Heart right ventricle (tissue), 16 donors: ENCODE measurements at regions of chr4 and their contacts with region 1.

Region 1: DNA sequence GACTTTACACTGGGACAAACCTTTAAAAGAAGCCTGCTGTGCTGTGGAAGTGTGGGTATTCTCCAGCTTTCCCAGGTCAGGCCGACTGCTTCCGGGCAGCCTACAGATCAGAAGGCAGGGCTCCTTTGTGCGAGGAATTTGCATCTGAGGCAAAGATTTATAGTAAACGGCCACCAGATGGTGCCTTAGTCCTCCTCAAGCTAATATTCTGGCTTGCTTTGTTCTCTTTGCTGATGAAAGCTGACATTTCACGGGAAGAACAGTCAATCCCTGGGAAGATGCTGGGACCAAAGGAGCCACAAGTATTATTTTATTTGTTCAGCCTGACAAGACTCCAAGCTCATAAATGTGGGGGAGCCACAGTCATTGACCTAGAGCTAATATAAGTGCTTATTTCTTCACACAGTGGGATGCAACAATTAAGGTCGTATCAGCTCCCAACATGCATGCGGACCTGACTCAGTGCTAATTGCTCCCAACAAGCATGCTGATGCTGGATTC is 120.7 kb upstream of the TRIM2 start:
- DNase-seq: peak in 1 of 2 donors; percentile 52
- ATAC-seq: peak; percentile 46 to 83 (median 74)
- H3K4me3 ChIP-seq: no peak overlapping the region
- H3K27ac ChIP-seq: no peak overlapping the region
- H3K4me1 ChIP-seq: peaks cover 0 to 25% (median 6%) of the 10 kb centered on the region in 9 donors
- H3K27me3 ChIP-seq: no peaks in the 10 kb centered on the region
- CTCF ChIP-seq: peak in 8 of 9 donors; percentile 28 to 71 (median 65)

Region 2: DNA sequence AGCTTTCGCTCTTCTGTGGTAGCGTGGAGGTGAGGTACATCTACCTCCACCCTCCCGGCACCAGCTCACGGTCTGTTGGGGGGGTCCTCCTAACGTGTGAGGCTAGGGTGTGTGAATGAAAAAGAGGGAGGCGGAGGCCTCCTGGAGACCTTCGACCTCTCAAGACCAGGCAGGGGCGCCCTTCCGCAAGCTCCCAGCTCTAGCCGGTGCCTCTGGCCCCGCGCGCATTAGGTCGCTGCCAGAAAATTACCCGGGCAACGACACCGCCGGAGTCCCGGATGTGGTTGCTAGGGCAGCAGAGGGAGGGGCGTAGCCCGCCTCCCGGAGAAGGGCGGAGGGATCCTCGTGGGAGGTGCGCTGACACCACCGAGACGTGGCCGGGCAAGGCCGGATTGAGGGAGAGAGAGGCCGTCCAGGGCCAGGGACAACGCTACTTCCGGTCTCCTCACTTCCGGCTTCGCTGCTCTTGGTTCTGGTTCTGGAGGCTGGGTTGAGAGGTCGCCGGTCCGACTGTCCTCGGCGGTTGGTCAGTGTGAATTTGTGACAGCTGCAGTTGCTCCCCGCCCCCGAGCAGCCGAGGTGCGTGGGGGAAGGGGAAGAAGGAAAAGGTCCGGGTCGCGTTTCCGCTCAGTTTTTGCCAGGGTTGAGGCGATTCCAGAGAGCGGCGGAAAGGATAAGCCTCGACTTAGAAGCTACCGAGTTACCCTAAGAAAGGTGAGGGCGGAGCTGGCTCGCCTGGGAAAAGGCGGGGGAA is 303.8 kb before region 1 on chr4 and contains the starts of genes ARFIP1 and TIGD4:
- intact Hi-C with region 1: loop called in 1 of 10 experiments (anchors 10 kb)
- DNase-seq: peak; percentile 97
- ATAC-seq: peak; percentile 99 to 100 (median 99)
- H3K4me3 ChIP-seq: peak within 1 kb of the TSS; percentile 51 to 95 (median 78)
- H3K27ac ChIP-seq: peak within 1 kb of the TSS; percentile 42 to 95 (median 88)
- H3K4me1 ChIP-seq: peaks cover 0 to 45% (median 23%) of the 10 kb centered on the region in 9 donors
- H3K27me3 ChIP-seq: no peaks in the 10 kb centered on the region
- CTCF ChIP-seq: peak in 6 of 9 donors; percentile 8 to 53 (median 42)
- total RNA-seq, gene ARFIP1: 11.3 to 18.7 (median 14.9) TPM
- total RNA-seq, gene TIGD4: 0.12 to 0.44 (median 0.20) TPM

Region 3: GRCh38 chr4:152850377-152850776 is 233.1 kb before region 1 on chr4:
- intact Hi-C with region 1: loop called (anchors 1 to 5 kb)
- DNase-seq: peak in 1 of 2 donors; percentile 31
- ATAC-seq: peak; percentile 62 to 95 (median 85)
- H3K4me3 ChIP-seq: no peak overlapping the region
- H3K27ac ChIP-seq: peak overlapping the region in 6 of 10 donors; percentile 2 to 70 (median 23)
- H3K4me1 ChIP-seq: peaks cover 0 to 20% (median 17%) of the 10 kb centered on the region in 9 donors
- H3K27me3 ChIP-seq: no peaks in the 10 kb centered on the region
- CTCF ChIP-seq: no peak

Region 4: DNA sequence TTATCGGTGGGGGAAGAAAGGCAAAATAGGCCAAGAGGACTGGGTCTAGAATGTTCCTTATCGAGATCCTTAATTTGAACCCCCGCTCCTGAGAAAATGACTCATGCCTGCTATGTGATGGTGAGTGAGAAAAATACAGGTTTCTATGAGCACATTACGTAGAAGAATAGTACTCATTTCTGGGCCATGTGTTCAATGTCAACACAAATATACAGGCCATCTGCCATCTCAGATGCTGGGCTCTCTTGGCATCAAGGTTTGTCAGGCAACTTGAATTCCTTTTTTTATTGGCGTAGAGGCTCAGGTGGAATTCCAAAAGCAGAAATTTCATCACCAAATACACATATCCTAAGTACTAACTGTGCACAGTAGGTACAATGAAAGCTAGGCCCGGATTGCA is 39.4 kb after region 1 on chr4:
- intact Hi-C with region 1: loop called (anchors 1 to 5 kb)
- DNase-seq: no peak
- ATAC-seq: no peak
- H3K4me3 ChIP-seq: no peak overlapping the region
- H3K27ac ChIP-seq: no peak overlapping the region
- H3K4me1 ChIP-seq: peaks cover 0 to 4% (median 0%) of the 10 kb centered on the region in 9 donors
- H3K27me3 ChIP-seq: peaks cover 0 to 8% (median 0%) of the 10 kb centered on the region in 7 donors
- CTCF ChIP-seq: no peak

Region 5: DNA sequence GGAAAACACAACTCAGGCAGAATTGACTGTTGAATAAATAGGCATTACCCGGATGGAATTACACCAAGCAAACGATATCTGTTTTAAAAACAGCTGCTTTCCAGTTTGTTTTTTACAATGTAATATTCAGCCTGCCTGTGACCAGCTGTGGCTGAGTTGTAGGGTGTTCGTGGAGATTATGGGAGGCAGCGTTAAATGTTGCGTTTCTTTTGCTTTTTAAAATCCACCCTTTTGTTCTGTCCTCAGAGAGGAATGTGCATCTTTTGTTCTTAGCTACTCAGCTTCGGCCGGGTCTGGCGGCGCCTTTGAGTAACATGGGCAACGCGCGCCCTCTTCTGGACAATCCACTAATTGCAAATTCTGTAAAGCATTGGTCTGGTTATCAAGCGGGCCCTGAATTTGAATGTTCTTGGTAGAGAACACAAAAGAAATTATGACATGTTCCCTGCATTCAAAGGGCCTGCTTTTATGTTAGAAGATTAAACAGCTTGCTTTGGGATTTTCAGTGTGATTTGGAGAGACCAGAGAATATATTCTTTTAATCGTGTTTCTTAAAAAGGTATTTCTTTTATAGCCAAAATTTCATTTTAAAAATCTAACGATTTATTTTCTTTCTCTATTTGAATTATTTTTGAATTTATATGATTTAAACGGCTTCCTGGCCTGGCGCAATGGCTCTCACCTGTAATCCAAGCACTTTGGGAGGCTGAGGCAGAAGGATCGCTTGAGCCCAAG is 44.4 kb after region 1 on chr4:
- intact Hi-C with region 1: loop called (anchors 1 to 5 kb)
- DNase-seq: peak; percentile 54 to 84
- ATAC-seq: peak; percentile 61 to 91 (median 86)
- H3K4me3 ChIP-seq: peak overlapping the region in 1 of 10 donors; percentile 3
- H3K27ac ChIP-seq: no peak overlapping the region
- H3K4me1 ChIP-seq: peaks cover 0 to 5% (median 0%) of the 10 kb centered on the region in 9 donors
- H3K27me3 ChIP-seq: peaks cover 0 to 8% (median 0%) of the 10 kb centered on the region in 7 donors
- CTCF ChIP-seq: peak; percentile 70 to 94 (median 89)

Region 6: GRCh38 chr4:153142700-153143438 is 59.4 kb after region 1 on chr4:
- intact Hi-C with region 1: no loop called
- DNase-seq: peak; percentile 62 to 72
- ATAC-seq: peak; percentile 75 to 92 (median 78)
- H3K4me3 ChIP-seq: peak overlapping the region in 3 of 10 donors; percentile 21 to 31 (median 22)
- H3K27ac ChIP-seq: no peak overlapping the region
- H3K4me1 ChIP-seq: peaks cover 0 to 15% (median 9%) of the 10 kb centered on the region in 9 donors
- H3K27me3 ChIP-seq: peaks cover 0 to 6% (median 0%) of the 10 kb centered on the region in 7 donors
- CTCF ChIP-seq: peak; percentile 69 to 94 (median 84)